ENCODE measurements at regions of chr21 and their contacts with region 1.

Region 1: DNA sequence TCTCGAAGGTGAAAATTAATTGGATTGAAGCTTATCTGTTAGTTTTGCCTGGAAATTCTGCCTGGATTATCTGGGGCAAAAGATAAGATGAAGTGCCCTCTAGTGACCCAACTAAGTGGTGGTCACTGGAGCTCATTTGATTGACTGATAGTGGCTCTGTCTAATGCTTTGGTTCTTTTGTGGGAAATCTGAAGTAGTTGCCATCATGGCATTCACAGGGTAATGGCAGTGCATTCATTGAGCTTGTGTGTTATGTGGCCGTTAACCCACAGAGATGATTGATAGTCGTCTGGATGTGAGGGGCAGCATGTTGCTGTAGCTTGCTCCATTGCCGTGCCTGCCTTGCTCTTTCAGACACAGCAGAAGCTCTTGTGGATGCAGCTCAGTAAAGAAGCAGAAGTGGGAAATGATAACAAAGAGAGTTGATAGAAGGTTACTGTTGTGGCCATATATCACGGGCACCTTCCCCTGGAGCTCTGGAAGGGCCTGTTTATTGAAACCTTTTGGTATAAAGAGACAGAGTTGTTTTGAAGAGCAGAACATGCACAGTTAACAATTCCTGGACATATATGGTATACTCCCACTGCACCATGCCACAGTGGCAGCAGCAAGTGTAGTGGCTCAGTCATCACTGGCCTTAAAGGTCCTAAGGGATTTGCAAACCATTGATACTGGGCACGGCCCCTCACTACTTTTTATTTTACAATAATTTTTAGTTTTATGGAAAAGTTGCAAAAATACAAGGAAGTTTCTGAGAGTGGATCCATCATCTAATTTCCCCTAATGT is 42.0 kb downstream of the CXADR start:
- DNase-seq: no peak
- H3K4me3 ChIP-seq: no peak overlapping the region
- CTCF ChIP-seq: peak; percentile 32

Region 2: DNA sequence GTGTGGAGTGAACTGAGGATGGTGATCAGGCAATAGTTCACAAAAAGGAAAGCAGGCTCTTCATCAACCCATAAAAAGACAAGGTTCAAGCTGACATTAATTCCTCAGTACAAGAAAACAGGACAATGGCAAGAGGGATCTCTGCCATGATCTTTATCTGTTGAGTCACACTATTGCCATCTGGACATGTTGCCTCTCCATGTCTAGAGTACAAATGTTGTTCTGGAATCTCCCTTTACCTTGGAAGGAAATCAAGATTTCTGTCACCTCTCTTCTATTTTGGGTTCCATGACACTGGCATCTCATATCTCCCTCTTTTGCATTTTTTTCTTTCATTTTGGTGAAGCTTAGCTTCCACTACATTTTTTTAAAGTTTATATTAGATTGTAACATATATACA is 1496.0 kb before region 1 on chr21:
- in situ Hi-C with region 1: no loop called
- DNase-seq: no peak
- H3K4me3 ChIP-seq: no peak overlapping the region
- CTCF ChIP-seq: no peak

Region 3: DNA sequence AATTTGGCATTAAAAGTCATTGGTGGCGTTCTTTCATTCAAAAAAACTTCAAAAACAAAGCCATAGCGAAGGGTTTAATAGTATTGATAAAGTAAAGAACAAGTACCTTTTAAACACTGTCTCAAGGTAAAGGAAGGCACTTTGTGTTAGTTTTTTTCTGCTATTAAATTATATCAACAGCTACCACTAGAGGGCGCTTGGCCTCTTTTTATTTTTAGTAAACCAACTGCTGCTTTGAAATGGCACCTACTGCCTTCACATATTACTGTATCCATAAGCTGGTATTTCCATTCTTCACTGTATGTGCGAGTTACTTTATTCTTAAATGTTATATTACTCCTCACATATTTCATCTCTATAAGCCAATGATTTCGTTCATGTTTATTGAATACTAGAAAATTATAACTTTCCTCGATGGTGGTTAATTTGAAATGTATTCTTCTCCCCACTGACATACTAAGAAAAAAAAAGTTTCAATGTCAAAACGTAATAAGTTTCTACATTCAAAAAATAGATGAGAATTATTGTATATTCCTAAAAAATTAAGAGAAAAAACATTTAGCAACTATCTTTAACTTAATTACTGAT is 167.7 kb before region 1 on chr21:
- in situ Hi-C with region 1: loop called (anchors 25 kb)
- DNase-seq: peak; percentile 58
- H3K4me3 ChIP-seq: no peak overlapping the region
- CTCF ChIP-seq: peak; percentile 49